CD8-positive, alpha-beta T cell (primary cell): ENCODE measurements at regions of chr14 and their contacts with region 1.

Region 1: DNA sequence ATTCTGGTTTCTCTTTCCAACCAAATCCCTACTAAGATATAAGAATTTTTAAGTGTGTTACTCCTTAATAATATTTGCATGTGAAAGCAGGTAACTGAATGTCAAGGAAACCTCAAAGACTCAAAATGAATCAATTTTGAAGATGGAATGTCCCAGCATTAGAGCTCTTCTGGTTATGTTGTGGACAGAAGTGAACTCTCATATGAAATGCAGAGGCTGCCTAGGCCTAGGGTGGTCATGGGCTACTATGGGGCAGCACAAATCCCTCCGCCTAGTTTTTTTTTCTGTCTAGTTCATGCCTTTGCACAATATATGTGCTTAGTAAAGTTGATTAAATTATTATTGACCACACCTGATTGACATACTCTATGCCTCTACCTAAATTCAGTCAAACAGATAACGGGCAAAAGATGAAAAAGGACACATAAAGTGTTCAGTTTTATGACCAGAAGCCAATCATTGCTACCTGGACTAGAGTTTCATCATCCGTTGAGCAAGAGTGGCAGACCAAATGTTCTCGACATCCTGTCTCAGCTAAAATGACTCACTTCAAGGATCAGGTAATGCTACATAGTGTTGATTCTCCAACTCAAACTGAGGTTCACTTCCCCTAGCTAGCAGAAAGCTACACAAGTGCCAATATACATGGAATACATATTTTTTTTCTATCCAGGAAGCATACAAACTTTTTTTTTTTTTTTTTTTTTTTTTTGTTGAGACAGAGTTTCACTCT is 1211.4 kb downstream of the VRK1 start:
- DNase-seq: peak in 1 of 9 experiments; percentile 26
- ATAC-seq: peak; percentile 68
- H3K4me3 ChIP-seq: no peak overlapping the region
- H3K4me3 Mint-ChIP-seq: no peak overlapping the region
- H3K27ac ChIP-seq: no peak overlapping the region
- H3K27ac Mint-ChIP-seq: no peak overlapping the region
- H3K4me1 ChIP-seq: peaks cover 31% of the 10 kb centered on the region
- H3K4me1 Mint-ChIP-seq: peaks cover 27% of the 10 kb centered on the region
- H3K27me3 ChIP-seq: no peaks in the 10 kb centered on the region
- H3K27me3 Mint-ChIP-seq: no peaks in the 10 kb centered on the region
- CTCF ChIP-seq: no peak

Region 2: DNA sequence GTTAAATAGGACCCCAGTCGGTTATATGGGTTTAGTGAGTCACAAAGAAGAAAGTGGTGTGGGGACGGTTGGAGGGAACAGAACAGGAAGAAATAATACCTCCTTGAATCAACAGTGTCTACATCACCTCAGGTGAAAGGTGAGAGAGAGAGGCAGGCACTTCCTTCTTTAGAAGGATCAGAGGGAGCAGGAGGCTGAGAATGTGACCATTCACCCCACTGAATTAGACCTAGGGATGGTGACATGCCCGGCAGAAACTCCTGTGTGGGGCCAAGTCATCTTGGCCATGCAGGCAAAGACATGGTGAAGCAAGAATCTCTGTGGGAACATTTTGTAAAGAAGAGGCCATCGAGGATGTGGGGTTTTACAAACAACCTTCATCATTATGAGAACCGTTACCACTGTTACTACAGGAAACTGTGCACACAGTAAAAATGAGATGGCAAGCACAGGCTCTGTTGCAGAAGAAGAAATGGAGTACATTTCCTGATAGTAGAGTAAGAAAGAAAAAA is 14.5 kb before region 1 on chr14:
- CTCF ChIA-PET with region 1: no interaction called
- POLR2A ChIA-PET with region 1: no interaction called
- intact Hi-C with region 1: loop called in 1 of 2 experiments (anchors 2 kb)
- DNase-seq: peak in 7 of 9 experiments; percentile 7 to 79 (median 58)
- ATAC-seq: peak; percentile 81
- H3K4me3 ChIP-seq: no peak overlapping the region
- H3K4me3 Mint-ChIP-seq: peak overlapping the region; percentile 9
- H3K27ac ChIP-seq: peak overlapping the region; percentile 62 to 83
- H3K27ac Mint-ChIP-seq: peak overlapping the region; percentile 98
- H3K4me1 ChIP-seq: peaks cover 66% of the 10 kb centered on the region
- H3K4me1 Mint-ChIP-seq: peaks cover 84% of the 10 kb centered on the region
- H3K27me3 ChIP-seq: no peaks in the 10 kb centered on the region
- H3K27me3 Mint-ChIP-seq: no peaks in the 10 kb centered on the region
- CTCF ChIP-seq: no peak

Region 3: DNA sequence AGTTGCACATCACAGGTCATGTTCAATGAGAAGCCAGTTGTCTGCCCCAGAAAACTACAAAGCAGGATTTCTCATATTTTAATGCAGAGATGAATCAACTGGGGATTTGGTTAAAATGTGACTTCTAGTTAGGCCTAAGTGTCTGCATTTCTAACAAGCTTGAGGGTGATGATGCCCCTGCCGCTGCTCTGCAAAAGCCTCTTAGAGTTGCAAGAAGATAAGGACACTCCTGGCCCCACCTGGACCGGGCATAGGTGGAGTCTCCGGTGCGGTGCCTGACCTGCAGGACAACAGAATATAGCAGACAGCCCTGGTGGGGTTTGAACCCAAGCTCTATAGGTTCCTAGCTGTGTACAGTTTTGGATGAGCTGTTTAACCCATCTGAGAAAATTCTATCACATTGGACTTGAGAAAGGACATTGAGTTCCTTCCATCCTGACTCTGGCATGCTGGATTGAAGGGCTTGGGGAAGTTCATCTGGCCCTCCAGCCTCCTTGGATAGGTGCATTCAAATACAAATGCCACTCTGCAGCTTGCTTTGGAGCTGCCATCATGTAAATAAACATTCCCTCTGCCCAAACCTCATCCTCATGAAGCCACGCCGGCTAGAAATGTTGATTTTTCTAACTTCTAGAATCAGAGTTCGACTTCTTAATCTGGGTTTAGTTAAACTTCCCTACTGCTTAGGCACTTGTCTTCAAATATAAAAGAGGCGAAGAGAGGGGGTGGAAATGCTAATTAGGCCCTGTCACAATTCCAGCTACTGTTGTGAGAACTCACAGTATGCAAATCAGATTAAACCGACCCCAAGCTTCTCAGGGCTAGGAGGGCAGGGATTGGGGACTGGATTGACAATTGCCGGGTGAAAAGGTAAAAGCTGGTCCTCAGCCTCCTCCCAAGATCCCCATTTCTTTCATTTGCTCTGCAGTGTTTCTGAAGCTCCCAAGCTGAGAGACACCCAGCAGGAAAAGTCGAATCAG is 14.3 kb after region 1 on chr14:
- CTCF ChIA-PET with region 1: interaction called, 5 read pairs
- POLR2A ChIA-PET with region 1: interaction called, 3 read pairs
- intact Hi-C with region 1: loop called in 1 of 2 experiments (anchors 2 kb)
- DNase-seq: no peak
- ATAC-seq: no peak
- H3K4me3 ChIP-seq: no peak overlapping the region
- H3K4me3 Mint-ChIP-seq: no peak overlapping the region
- H3K27ac ChIP-seq: no peak overlapping the region
- H3K27ac Mint-ChIP-seq: no peak overlapping the region
- H3K4me1 ChIP-seq: peaks cover 30% of the 10 kb centered on the region
- H3K4me1 Mint-ChIP-seq: peaks cover 32% of the 10 kb centered on the region
- H3K27me3 ChIP-seq: no peaks in the 10 kb centered on the region
- H3K27me3 Mint-ChIP-seq: no peaks in the 10 kb centered on the region
- CTCF ChIP-seq: no peak

Region 4: DNA sequence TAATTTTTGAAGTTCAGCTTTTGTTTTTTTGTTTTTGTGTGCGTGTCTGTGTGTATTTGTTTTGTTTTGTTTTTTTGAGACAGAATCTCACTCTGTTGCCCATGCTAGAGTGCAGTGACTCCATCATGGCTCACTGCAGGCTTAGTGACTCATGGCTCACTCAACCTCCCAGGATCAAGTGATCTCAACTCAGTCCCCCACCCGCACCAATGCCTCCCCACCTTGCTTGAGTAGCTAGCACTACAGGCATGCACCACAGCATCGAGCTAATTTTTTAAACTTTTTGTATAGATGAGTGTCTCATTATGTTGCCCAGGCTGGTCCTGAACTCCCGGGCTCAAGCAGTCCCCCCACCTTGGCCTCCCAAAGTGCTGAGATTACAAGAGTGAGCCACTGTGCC is 282.0 kb after region 1 on chr14:
- CTCF ChIA-PET with region 1: no interaction called
- POLR2A ChIA-PET with region 1: no interaction called
- intact Hi-C with region 1: no loop called
- DNase-seq: no peak
- ATAC-seq: no peak
- H3K4me3 ChIP-seq: no peak overlapping the region
- H3K4me3 Mint-ChIP-seq: no peak overlapping the region
- H3K27ac ChIP-seq: no peak overlapping the region
- H3K27ac Mint-ChIP-seq: no peak overlapping the region
- H3K4me1 ChIP-seq: no peaks in the 10 kb centered on the region
- H3K4me1 Mint-ChIP-seq: peaks cover 7% of the 10 kb centered on the region
- H3K27me3 ChIP-seq: no peaks in the 10 kb centered on the region
- H3K27me3 Mint-ChIP-seq: no peaks in the 10 kb centered on the region
- CTCF ChIP-seq: no peak